Right lobe of liver (tissue), 6 donors: ENCODE measurements at regions of chr12 and their contacts with region 1.

Region 1: GRCh38 chr12:121190523-121191031 is 19.4 kb upstream of the P2RX4 start:
- DNase-seq: no peak
- ATAC-seq: peak; percentile 26 to 80 (median 65)
- H3K4me3 ChIP-seq: no peak overlapping the region
- H3K27ac ChIP-seq: peak overlapping the region in 1 of 3 donors; percentile 43
- H3K4me1 ChIP-seq: no peaks in the 10 kb centered on the region
- H3K27me3 ChIP-seq: no peaks in the 10 kb centered on the region
- CTCF ChIP-seq: no peak
- POLR2A ChIP-seq: no peak

Region 2: DNA sequence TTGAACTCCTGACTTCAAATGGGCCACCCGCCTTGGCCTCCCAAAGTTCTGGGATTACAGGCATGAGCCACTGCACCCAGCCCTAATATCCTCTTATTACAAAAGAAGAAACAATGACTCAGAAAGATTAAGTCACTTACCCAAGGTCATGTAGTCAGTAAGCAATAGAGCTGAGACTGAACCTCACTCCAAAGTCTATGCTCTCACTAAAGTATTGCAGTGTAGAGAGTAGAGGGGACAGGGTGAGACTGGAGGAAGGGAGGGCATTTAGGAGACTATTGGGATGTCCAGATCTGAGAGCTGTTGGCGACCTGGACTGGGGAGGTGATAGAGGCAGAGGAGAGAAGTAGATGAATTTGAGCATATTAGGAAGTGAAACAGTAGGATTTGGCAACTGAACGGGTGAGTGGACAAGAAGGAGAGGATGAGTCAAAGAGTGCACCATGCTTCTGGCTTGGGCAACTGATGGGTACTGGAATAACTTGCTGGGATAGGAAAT is 46.1 kb before region 1 on chr12:
- intact Hi-C with region 1: loop called in 1 of 2 experiments (anchors 10 kb)
- DNase-seq: no peak
- ATAC-seq: peak; percentile 38 to 70 (median 51)
- H3K4me3 ChIP-seq: no peak overlapping the region
- H3K27ac ChIP-seq: no peak overlapping the region
- H3K4me1 ChIP-seq: no peaks in the 10 kb centered on the region
- H3K27me3 ChIP-seq: no peaks in the 10 kb centered on the region
- CTCF ChIP-seq: no peak
- POLR2A ChIP-seq: no peak